H1 (cell line): ENCODE measurements at regions of chr17 and their contacts with region 1.

Region 1: DNA sequence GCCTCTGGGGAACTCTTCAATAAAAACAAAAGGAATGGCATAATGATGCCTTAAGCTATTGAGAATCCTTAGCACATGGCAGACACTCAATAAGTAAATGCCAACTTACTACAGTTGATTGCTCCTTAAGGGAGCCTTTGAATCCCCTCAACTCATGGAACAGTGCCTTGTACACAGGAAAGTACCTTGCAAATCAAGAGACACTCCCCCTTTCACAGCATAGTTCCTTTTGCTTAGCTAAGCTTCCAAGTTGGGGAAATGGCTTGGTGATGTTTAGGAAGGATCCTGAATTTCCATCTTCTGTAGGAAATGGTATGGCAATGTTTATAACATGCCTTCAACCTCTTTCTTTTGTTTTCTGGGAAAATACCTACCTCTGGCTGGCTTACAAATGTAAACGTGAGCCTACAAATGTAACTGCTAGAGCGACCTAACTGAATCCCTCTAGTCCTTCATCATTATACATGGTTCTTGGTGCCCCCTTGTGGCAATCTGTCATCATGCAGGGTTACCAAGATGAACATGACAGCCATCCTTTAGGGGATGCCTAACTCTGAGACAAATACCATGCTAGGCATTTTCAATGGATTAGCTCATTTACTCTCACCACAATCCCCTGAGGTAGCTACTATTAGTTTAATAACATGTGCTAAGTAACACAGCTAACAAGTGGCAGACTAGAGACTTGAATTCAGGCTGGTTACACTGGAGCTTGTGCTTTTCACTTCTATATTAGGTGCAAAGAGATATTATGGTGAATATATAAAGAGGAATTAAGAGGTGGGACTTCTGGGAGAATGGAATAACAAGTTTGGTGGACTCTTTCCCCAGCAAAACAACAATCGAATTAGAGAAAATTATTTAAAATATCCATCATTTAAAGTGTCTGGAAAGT is 65.0 kb downstream of the MMD start:
- DNase-seq: peak; percentile 51 to 84
- H3K4me3 ChIP-seq: no peak overlapping the region
- H3K27ac ChIP-seq: no peak overlapping the region
- H3K4me1 ChIP-seq: peaks cover 0 to 4% (median under 1%) of the 10 kb centered on the region in 4 experiments; a peak in 3 of 7 replicates
- H3K27me3 ChIP-seq: no peaks in the 10 kb centered on the region; a peak in 1 of 7 replicates
- CTCF ChIP-seq: peak in 2 of 3 experiments; percentile 76 to 92; a peak in 3 of 4 replicates
- EP300 ChIP-seq: no peak
- POLR2A ChIP-seq: no peak
- RAD21 ChIP-seq: peak; percentile 84 to 90

Region 2: DNA sequence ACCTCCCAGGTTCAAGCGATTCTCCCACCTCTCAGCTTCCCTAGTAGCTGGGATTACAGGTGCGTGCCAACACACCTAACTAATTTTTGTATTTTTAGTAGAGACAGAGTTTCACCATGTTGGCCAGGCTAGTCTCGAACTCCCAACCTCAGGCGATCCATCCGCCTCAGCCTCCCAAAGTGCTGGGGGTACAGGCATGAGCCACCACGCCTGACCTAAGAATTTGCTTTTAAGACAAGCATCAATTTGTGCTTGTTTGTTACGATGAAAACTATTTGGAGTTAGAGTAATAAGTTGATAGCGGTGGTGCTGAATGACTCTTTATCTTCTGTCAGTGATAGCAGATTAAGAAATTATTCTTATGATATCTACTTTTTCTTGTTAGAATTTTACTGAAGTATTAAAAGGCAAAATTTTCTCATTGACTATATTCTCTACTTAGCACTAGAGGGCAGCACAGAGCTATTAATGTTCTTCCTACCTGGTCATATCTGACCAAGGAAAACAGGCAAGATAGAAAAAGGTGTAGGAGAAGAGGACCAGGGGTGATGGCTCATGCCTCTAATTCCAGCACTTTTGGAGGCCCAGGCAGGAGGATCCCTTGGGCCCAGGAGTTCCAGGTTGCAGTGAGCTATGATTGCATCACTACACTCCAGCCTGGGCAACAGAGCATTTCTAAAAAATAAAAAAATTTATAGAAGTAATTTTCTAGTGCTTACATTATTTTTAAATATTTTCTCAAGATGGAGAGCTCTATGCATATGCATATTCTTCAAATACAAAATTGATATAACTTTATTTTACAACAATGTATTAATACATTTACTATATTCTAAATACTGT is 363.7 kb before region 1 on chr17:
- CTCF ChIA-PET with region 1: interaction called, 22 read pairs
- POLR2A ChIA-PET with region 1: interaction called, 3 read pairs
- DNase-seq: no peak
- H3K4me3 ChIP-seq: no peak overlapping the region
- H3K27ac ChIP-seq: no peak overlapping the region
- H3K4me1 ChIP-seq: no peaks in the 10 kb centered on the region
- H3K27me3 ChIP-seq: no peaks in the 10 kb centered on the region
- CTCF ChIP-seq: peak in 2 of 3 experiments; percentile 45 to 47; a peak in 2 of 4 replicates
- EP300 ChIP-seq: no peak
- POLR2A ChIP-seq: no peak
- RAD21 ChIP-seq: peak; percentile 63 to 67

Region 3: GRCh38 chr17:55334285-55334684 is 22.4 kb before region 1 on chr17:
- CTCF ChIA-PET with region 1: interaction called, 13 read pairs
- POLR2A ChIA-PET with region 1: no interaction called
- DNase-seq: no peak
- H3K4me3 ChIP-seq: no peak overlapping the region
- H3K27ac ChIP-seq: no peak overlapping the region
- H3K4me1 ChIP-seq: peaks cover 0 to 5% (median 1%) of the 10 kb centered on the region in 4 experiments; a peak in 3 of 7 replicates
- H3K27me3 ChIP-seq: no peaks in the 10 kb centered on the region
- CTCF ChIP-seq: no peak
- EP300 ChIP-seq: no peak
- POLR2A ChIP-seq: no peak
- RAD21 ChIP-seq: no peak

Region 4: GRCh38 chr17:55513885-55514591 is 157.4 kb after region 1 on chr17:
- CTCF ChIA-PET with region 1: interaction called, 40 read pairs
- POLR2A ChIA-PET with region 1: no interaction called
- DNase-seq: peak; percentile 36 to 89
- H3K4me3 ChIP-seq: no peak overlapping the region
- H3K27ac ChIP-seq: no peak overlapping the region
- H3K4me1 ChIP-seq: peaks cover 0 to 4% (median 2%) of the 10 kb centered on the region in 4 experiments; a peak in 2 of 7 replicates
- H3K27me3 ChIP-seq: no peaks in the 10 kb centered on the region
- CTCF ChIP-seq: peak in 2 of 3 experiments; percentile 72 to 79; a peak in 3 of 4 replicates
- EP300 ChIP-seq: no peak
- POLR2A ChIP-seq: no peak
- RAD21 ChIP-seq: peak; percentile 86 to 93

Region 5: GRCh38 chr17:55564081-55564480 is 207.4 kb after region 1 on chr17:
- CTCF ChIA-PET with region 1: no interaction called
- POLR2A ChIA-PET with region 1: no interaction called
- DNase-seq: no peak
- H3K4me3 ChIP-seq: no peak overlapping the region
- H3K27ac ChIP-seq: no peak overlapping the region
- H3K4me1 ChIP-seq: peaks cover 0 to 9% (median 5%) of the 10 kb centered on the region in 4 experiments; a peak in 4 of 7 replicates
- H3K27me3 ChIP-seq: no peaks in the 10 kb centered on the region
- CTCF ChIP-seq: no peak
- EP300 ChIP-seq: no peak
- POLR2A ChIP-seq: no peak
- RAD21 ChIP-seq: no peak